ENCODE measurements at regions of chr9 and their contacts with region 1.

Region 1: DNA sequence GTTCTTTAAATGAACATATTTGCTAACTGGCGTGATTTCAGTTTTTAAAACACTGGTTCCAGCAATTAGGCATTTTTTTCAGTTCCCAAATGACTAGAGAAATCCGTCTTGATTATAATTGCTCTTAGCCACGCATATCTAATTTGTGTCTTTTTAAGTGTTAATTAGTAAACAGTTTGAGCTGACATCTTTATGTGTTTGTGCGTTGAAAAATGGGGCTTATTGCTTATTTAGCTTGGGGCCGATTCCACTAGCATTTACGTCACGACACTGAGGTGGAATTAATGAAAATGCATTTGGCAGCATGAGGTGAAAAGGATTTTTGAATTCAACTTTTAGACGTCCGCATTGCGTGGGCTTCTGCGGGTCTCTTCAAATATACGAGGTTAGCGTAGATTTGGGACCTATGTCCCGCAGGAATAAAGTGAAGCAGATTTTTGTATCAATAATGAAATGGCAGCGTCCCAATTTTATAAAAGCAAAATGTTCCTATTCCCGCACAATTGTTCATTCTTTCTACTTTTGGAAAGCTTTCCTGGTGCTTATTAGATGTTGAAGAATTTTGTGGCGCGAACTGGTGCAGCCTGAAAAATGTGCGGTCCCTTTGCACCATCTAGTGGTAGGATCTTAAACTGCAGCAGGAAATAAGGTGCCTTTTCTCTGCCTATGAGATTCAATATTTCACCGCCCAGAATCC is 122.7 kb upstream of the LMX1B start:
- DNase-seq: peak; percentile 69
- ATAC-seq: peak; percentile 91
- H3K4me3 ChIP-seq: no peak overlapping the region
- H3K27ac ChIP-seq: no peak overlapping the region
- H3K4me1 ChIP-seq: no peaks in the 10 kb centered on the region
- H3K27me3 ChIP-seq: no peaks in the 10 kb centered on the region
- CTCF ChIP-seq: peak; percentile 92
- POLR2A ChIP-seq: 0 out of 2 replicates have a peak, but pooled peaks have one; percentile 34
- RAD21 ChIP-seq: peak; percentile 95

Region 2: DNA sequence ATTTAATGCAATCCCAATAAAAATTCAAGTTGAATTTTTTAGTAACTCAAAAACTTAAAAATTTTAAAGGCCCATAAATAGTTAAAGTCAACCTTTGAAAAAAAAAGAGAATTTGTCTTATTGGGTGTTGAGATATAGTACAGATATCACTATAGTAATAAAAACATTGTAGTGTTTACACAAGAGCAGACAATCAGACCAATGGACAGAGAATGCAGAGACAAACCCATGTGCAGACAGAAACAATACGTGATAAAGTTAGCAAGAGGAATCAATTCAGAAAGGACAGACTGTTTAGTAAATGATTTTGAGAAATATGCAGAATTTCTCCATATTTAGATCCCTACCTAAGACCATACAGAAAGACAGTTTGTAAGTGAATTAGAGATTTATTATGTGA is 1584.1 kb before region 1 on chr9:
- CTCF ChIA-PET with region 1: no interaction called
- POLR2A ChIA-PET with region 1: no interaction called
- dilution Hi-C with region 1: no loop called
- in situ Hi-C with region 1: no loop called
- intact Hi-C with region 1: no loop called
- DNase-seq: no peak
- ATAC-seq: no peak
- H3K4me3 ChIP-seq: no peak overlapping the region
- H3K27ac ChIP-seq: no peak overlapping the region
- H3K4me1 ChIP-seq: no peaks in the 10 kb centered on the region
- H3K27me3 ChIP-seq: no peaks in the 10 kb centered on the region
- CTCF ChIP-seq: no peak
- POLR2A ChIP-seq: no peak
- RAD21 ChIP-seq: no peak

Region 3: GRCh38 chr9:126228781-126229444 is 262.1 kb before region 1 on chr9:
- CTCF ChIA-PET with region 1: no interaction called
- POLR2A ChIA-PET with region 1: no interaction called
- dilution Hi-C with region 1: no loop called
- in situ Hi-C with region 1: no loop called
- intact Hi-C with region 1: loop called (anchors 5 kb)
- DNase-seq: peak; percentile 57
- ATAC-seq: peak; percentile 100
- H3K4me3 ChIP-seq: no peak overlapping the region
- H3K27ac ChIP-seq: no peak overlapping the region
- H3K4me1 ChIP-seq: no peaks in the 10 kb centered on the region
- H3K27me3 ChIP-seq: peaks cover 58% of the 10 kb centered on the region
- CTCF ChIP-seq: peak; percentile 88
- POLR2A ChIP-seq: no peak
- RAD21 ChIP-seq: peak; percentile 91

Region 4: DNA sequence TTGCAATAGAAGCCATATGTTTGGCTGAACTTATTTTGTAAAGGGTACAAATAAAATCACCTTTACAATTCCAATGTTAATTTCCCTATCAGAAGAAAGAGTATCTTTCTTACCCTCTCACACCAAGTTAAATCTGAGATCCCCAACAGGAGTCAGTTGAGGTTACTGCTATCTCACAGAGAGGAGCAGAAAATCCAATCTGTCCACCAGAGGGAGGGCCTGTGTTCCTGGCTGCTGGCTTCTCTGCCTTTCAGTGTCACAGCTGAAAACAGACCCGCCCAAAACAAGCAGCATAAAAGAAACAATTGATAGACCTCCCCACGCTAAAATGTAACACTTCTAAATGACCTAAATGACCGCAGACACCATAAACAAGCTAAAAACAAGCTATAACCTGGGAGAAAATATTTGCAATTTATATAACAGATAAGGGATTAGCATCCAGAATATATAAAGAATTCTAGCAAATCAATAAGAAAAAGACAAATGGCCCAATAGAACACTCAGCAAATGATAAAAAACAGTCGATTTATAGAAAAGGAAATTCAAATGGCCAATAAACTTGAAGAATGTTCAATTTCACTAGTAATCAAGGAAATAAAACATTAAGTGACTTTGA is 188.9 kb before region 1 on chr9:
- CTCF ChIA-PET with region 1: interaction called, 7 read pairs
- POLR2A ChIA-PET with region 1: no interaction called
- dilution Hi-C with region 1: no loop called
- in situ Hi-C with region 1: loop called (anchors 5 kb)
- intact Hi-C with region 1: loop called (anchors 1 kb)
- DNase-seq: peak; percentile 62
- ATAC-seq: peak; percentile 85
- H3K4me3 ChIP-seq: no peak overlapping the region
- H3K27ac ChIP-seq: no peak overlapping the region
- H3K4me1 ChIP-seq: no peaks in the 10 kb centered on the region
- H3K27me3 ChIP-seq: peaks cover 46% of the 10 kb centered on the region
- CTCF ChIP-seq: peak; percentile 74
- POLR2A ChIP-seq: no peak
- RAD21 ChIP-seq: peak; percentile 72

Region 5: GRCh38 chr9:126471084-126471624 is 19.9 kb before region 1 on chr9:
- CTCF ChIA-PET with region 1: interaction called, 12 read pairs
- POLR2A ChIA-PET with region 1: no interaction called
- dilution Hi-C with region 1: no loop called
- in situ Hi-C with region 1: no loop called
- intact Hi-C with region 1: no loop called
- DNase-seq: peak; percentile 52
- ATAC-seq: no peak
- H3K4me3 ChIP-seq: no peak overlapping the region
- H3K27ac ChIP-seq: no peak overlapping the region
- H3K4me1 ChIP-seq: peaks cover 9% of the 10 kb centered on the region
- H3K27me3 ChIP-seq: no peaks in the 10 kb centered on the region
- CTCF ChIP-seq: no peak
- POLR2A ChIP-seq: no peak
- RAD21 ChIP-seq: no peak